Astrocyte of the cerebellum (primary cell): ENCODE measurements at regions of chr20 and their contacts with region 1.

Region 1: DNA sequence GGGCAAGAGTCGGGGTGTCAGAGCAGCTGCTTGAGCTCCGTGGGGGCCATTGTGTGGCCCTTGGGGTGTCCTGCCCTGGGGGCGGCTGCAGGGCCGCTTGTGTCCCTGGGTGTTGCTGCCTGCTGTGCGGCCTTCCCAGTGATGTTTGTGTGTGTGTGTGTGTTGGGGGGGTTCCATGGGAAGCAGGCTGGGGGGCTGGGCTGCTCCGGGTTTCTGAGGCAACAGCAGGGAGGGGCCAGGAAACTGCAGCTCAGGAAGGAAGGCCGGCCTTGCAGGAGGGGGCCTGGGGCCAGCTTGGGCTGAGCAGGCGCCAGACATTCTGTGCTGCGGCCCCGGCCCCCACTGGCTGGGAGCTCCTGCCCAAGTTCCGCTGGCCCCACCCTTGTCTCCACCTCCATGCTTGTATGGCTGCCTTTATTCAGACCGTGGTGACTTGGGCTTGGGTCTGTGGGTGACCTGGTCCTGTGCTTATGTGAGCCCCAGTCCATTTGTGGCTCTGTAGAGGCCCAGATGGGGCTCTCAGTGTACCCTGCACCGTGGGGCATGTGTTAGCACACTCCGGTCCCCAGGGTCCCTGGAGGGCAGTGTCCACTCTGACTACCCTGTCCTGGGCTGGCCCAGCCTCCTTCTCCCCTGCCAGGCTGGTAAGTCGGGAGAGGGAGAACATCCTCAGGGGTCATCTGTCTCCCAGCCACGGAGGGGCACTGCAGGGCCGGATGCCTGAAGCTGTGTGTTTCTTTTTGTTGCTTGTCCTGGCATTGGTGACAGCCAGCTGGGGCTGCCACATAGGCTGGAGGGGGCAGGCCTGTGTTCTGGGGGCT is 4.6 kb upstream of the SOX18 start:
- DNase-seq: no peak
- H3K4me3 ChIP-seq: no peak overlapping the region
- CTCF ChIP-seq: peak; percentile 23

Region 2: GRCh38 chr20:64001607-64002011 is 52.4 kb before region 1 on chr20:
- in situ Hi-C with region 1: loop called (anchors 5 kb)
- DNase-seq: no peak
- H3K4me3 ChIP-seq: no peak overlapping the region
- CTCF ChIP-seq: no peak